Calu3 (cell line): ENCODE measurements at regions of chr6 and their contacts with region 1.

Region 1: GRCh38 chr6:143745166-143746133 is 67.7 kb downstream of the PHACTR2 start:
- DNase-seq: peak; percentile 47
- H3K4me3 Mint-ChIP-seq: peak overlapping the region; percentile 60
- H3K27ac Mint-ChIP-seq: peak overlapping the region; percentile 73
- H3K4me1 Mint-ChIP-seq: peaks cover 34% of the 10 kb centered on the region
- H3K27me3 Mint-ChIP-seq: no peaks in the 10 kb centered on the region
- CTCF ChIP-seq: no peak

Region 2: DNA sequence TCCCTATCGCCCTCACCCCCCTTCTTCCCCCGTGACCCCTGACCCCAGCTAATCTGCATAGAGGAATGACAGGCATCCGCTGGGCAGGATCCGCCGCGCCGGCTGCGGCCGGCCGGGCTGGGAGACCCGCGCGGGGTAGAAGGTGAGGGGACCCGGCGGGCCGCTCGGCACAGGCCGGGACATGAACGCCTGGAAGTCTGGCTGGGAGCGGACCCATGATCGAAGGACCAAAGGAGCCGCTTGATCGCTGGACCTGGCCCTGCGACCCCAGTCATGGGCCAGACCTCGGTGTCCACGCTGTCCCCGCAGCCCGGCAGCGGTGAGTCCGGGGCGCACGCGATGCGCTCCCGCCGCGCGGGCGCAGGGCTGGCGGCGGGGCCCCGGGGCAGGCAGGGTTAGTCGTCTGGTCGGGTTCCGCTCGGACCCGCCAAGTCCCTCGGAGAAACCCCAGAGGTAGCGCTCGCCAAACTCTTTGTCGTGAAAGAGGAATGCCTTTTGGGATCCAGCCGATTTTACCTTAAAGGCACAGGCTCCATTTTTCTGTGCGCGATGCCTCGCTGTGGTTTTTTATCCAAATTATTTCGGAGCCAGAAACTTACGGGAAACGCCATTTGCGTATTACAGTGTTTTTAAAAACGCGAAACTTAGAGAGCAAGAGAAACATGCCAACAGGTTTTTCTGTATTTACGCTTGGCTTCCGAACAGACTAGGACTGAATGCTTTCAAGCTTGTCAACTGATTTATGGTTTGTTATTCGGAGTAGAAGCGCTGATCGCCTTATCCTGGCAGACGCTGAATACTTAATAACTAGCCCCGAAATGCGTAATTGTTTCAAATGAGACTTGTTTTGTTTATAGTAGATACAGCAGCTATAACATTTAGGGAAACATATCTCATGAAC is 67.3 kb before region 1 on chr6 and contains the start of gene PHACTR2:
- CTCF ChIA-PET with region 1: no interaction called
- intact Hi-C with region 1: loop called (anchors 5 kb)
- DNase-seq: peak; percentile 58
- H3K4me3 Mint-ChIP-seq: peak within 1 kb of the TSS; percentile 76
- H3K27ac Mint-ChIP-seq: peak within 1 kb of the TSS; percentile 75
- H3K4me1 Mint-ChIP-seq: peaks cover 28% of the 10 kb centered on the region
- H3K27me3 Mint-ChIP-seq: no peaks in the 10 kb centered on the region
- CTCF ChIP-seq: no peak
- total RNA-seq, gene PHACTR2: 19.5 and 20.7 TPM in 2 replicates

Region 3: DNA sequence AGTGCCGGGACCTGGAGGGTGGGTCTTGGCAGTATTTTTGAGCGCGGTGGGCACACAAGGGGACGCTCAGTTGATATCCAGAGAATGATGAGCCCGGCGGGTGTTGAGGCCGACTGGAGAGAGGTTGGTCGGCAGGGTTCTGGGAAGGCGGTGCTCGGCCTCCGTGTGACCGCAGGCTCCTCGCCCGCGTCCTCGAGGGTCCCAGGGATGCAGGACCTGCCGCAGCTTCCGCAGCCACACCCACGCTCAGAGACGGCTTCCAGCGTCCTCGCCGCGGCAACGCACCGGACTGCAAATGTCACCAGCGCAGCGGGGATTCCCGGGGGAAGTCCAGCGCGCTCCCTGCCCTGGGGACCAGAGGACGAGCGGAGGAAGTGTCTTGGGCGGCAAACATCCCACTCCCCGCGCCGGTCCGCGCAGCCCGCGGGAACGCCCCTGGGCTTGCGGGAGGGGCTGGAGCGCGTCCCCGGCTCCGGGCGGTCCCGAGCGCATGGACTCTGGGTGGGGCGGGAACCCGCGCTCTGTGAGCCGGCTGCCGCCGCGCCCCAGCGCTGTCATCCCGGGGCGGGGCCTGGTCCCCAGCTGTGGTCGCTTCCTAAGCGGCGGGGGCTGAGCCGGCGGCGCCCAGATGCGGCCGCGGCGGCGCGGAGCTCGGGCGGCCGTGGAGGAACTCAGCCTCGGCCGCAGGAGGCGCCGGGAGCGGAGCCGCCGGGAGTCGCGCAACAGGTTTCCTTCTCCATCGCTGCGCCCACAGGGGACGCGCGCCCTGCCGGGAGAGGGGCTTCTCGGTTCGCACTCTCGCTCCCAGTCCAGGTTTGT is 404.6 kb after region 1 on chr6 and contains the start of gene STX11:
- CTCF ChIA-PET with region 1: no interaction called
- intact Hi-C with region 1: no loop called
- DNase-seq: peak; percentile 36
- H3K4me3 Mint-ChIP-seq: peak within 1 kb of the TSS; percentile 90
- H3K27ac Mint-ChIP-seq: no peak within 1 kb of the TSS
- H3K4me1 Mint-ChIP-seq: peaks cover 7% of the 10 kb centered on the region
- H3K27me3 Mint-ChIP-seq: peaks cover 27% of the 10 kb centered on the region
- CTCF ChIP-seq: no peak
- total RNA-seq, gene STX11: 0.24 TPM in 1 of 2 replicates, not detected in the other